Naive thymus-derived CD4-positive, alpha-beta T cell (primary cell): ENCODE measurements at regions of chr2 and their contacts with region 1.

Region 1: GRCh38 chr2:27489498-27490397 is at the start of gene IFT172:
- DNase-seq: peak; percentile 90 to 100 (median 99)
- ATAC-seq: peak; percentile 96
- H3K4me3 ChIP-seq: peak within 1 kb of the TSS; percentile 63
- H3K4me3 Mint-ChIP-seq: peak within 1 kb of the TSS; percentile 78 to 92 (median 84)
- H3K27ac ChIP-seq: peak within 1 kb of the TSS; percentile 80
- H3K27ac Mint-ChIP-seq: peak within 1 kb of the TSS; percentile 82 to 99 (median 98)
- H3K4me1 ChIP-seq: peaks cover 11 to 16% of the 10 kb centered on the region in 2 donors
- H3K4me1 Mint-ChIP-seq: peaks cover 8 to 29% (median 19%) of the 10 kb centered on the region in 7 donors
- H3K27me3 ChIP-seq: peaks cover 0 to 7% of the 10 kb centered on the region in 2 donors
- H3K27me3 Mint-ChIP-seq: peaks cover 13 to 20% (median 17%) of the 10 kb centered on the region in 5 donors
- total RNA-seq, gene IFT172: 12.3 to 35.8 (median 22.2) TPM

Region 2: DNA sequence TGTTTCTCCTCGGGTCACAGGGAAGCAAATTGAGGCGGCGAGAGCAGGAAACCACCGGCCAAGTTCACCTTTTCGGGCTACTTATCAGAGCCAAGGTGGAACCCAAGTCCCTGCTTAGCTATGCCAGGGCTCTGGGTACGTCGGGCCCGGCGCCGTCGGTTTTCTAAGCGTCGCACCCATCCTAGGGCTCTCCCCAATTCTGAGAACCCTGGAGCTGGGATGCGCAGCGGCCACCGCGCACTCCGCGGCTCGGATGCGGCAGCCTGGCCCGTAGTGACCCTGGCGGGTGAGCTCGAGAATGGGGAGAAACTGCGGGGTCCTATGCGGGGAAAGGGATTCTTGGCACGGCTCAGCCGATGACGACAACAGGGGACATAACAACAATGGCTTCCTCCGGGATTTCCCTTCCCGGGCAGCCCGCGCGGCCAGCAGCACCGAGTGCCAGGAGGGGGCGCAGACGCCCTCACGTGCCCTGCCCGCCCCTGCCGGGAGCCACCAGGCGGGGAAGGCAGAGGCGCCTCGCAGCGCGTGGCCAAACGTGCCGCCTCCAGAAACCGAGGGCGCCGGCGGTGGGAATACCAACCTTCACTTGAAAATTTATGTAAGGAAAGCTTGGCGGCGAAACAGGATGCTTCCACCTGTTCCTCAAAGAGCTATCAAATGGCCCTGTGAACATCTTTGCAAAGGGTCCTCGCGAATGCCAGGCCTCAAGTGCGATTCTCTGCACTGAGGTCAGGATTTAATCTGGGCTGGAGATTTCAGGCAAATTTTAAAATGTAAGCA is 224.8 kb before region 1 on chr2:
- CTCF ChIA-PET with region 1: no interaction called
- POLR2A ChIA-PET with region 1: no interaction called
- intact Hi-C with region 1: loop called in 1 of 2 experiments (anchors 5 kb)
- DNase-seq: peak in 8 of 9 donors; percentile 39 to 63 (median 46)
- ATAC-seq: peak; percentile 85
- H3K4me3 ChIP-seq: peak overlapping the region; percentile 59
- H3K4me3 Mint-ChIP-seq: peak overlapping the region in 9 of 10 donors; percentile 59 to 97 (median 85)
- H3K27ac ChIP-seq: no peak overlapping the region
- H3K27ac Mint-ChIP-seq: peak overlapping the region in 2 of 9 donors; percentile 2 to 38
- H3K4me1 ChIP-seq: peaks cover 8 to 23% of the 10 kb centered on the region in 2 donors
- H3K4me1 Mint-ChIP-seq: peaks cover 23 to 33% (median 29%) of the 10 kb centered on the region in 7 donors
- H3K27me3 ChIP-seq: peaks cover 6 to 18% of the 10 kb centered on the region in 2 donors
- H3K27me3 Mint-ChIP-seq: peaks cover 34 to 47% (median 40%) of the 10 kb centered on the region in 5 donors

Region 3: DNA sequence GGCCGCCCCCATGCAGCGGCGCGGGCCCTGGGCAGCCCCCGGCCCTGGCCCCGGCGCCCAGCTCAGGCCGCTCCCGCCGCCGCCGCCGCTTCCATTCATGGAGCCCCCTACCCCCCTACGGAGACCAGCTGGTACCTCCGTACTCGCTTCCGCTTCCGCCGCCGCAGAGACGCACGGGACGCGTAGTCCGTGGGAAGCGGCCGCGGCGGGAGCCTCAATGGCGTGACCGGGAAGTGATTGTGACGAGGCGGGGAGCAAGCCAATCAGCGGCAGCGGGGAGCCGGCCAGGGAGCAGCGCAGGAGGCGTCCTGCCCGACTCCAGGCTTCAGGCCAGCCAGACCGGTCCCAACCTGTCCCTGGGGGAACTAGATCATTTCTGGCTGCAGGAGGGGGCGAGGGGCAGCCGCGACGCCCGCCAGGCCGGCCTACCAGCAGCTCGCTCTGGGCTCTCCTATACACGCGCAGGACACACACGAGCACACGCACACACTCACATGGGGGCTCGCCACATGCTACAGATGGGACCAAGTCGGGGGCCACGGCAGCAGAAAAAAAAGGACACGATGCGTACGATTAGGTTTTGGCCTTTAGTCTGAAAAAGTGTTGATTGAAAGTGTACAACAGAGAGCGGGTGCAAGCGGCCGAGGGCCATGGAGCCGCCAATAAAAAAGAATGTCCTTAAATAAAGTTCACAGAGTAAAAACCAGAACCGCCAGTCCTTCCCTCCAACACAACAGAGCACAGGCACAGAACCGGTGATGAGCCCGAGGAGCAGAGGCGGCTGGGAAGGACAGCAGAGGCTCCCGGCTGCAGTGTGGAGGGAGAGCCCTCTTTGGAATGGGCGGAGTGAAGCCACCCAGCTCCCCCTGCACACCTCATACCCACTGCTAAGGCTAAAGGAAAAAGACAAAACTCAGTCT is 108.9 kb before region 1 on chr2 and contains the start of gene ZNF513:
- CTCF ChIA-PET with region 1: no interaction called
- POLR2A ChIA-PET with region 1: no interaction called
- intact Hi-C with region 1: loop called in 1 of 2 experiments (anchors 1 kb)
- DNase-seq: peak; percentile 71 to 88 (median 81)
- ATAC-seq: peak; percentile 97
- H3K4me3 ChIP-seq: peak within 1 kb of the TSS; percentile 67
- H3K4me3 Mint-ChIP-seq: peak within 1 kb of the TSS; percentile 85 to 94 (median 90)
- H3K27ac ChIP-seq: peak within 1 kb of the TSS; percentile 85
- H3K27ac Mint-ChIP-seq: peak within 1 kb of the TSS; percentile 88 to 97 (median 94)
- H3K4me1 ChIP-seq: peaks cover 9 to 10% of the 10 kb centered on the region in 2 donors
- H3K4me1 Mint-ChIP-seq: peaks cover 18 to 33% (median 30%) of the 10 kb centered on the region in 7 donors
- H3K27me3 ChIP-seq: no peaks in the 10 kb centered on the region
- H3K27me3 Mint-ChIP-seq: no peaks in the 10 kb centered on the region
- total RNA-seq, gene ZNF513: 15.6 to 23.2 (median 19.2) TPM

Region 4: DNA sequence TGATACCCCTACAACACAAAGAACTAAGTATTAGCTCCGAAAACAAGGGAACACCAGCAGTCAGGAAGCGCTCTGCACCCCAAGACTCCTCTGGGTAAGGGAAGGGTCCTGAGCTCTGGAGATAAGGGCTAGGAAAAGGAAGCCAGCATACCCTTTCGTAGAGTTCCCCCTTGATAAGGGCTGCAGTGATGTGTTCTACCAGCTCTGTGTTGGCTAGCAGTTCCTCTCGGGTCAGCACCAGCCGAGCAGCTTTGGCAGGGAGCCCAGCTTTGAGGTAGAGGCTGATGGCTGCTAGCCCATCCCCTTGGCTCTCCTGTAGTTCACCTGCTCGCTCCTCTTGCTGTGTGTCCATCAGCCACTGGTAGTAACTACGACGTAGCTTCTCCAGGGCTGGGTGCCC is 28.6 kb before region 1 on chr2:
- CTCF ChIA-PET with region 1: no interaction called
- POLR2A ChIA-PET with region 1: no interaction called
- intact Hi-C with region 1: no loop called
- DNase-seq: no peak
- ATAC-seq: no peak
- H3K4me3 ChIP-seq: no peak overlapping the region
- H3K4me3 Mint-ChIP-seq: no peak overlapping the region
- H3K27ac ChIP-seq: no peak overlapping the region
- H3K27ac Mint-ChIP-seq: no peak overlapping the region
- H3K4me1 ChIP-seq: no peaks in the 10 kb centered on the region
- H3K4me1 Mint-ChIP-seq: peaks cover 0 to 3% (median 0%) of the 10 kb centered on the region in 7 donors
- H3K27me3 ChIP-seq: no peaks in the 10 kb centered on the region
- H3K27me3 Mint-ChIP-seq: no peaks in the 10 kb centered on the region

Region 5: DNA sequence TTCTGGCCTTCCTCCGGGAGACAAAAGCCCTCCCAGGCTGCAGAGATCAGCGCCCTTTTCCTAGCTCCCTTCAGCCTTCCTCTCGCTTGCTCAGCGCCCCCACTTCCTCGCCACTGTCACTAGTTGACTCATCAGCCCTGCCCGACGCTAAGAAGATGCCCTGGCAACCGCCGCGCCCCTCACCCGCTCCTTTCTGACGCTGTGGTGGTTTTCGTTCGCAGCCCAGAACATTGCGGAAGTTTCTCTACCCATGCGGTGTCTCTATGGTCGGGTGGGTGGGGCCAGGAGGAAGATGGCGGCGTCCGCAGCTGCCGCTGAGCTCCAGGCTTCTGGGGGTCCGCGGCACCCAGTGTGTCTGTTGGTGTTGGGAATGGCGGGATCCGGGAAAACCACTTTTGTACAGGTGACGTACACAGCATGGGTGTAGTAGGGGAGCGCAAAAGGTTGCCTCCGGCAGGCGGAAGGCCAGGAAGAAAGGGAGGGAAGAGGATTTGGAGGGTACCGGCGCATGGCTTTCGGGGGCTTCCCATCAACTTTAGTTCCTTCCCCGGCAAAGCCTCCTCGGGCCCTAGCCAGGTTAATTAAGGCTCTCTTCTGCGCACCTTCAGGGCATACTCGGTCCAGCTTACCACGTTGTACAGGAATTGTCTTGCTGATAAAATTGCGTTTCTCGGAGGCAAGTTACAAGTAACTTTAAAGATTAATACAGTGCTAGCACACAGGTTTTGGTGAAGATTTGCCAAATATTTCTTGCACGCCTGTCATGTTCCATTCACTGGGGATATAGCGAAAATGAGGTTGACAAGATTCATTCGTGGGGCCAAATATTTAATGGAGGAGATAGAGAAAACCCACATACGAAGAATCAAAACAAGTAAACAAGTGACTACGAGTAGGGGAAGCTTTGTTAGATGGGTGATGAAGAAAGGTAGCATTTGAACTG is 139.3 kb after region 1 on chr2 and contains the starts of genes CCDC121 and GPN1:
- CTCF ChIA-PET with region 1: no interaction called
- POLR2A ChIA-PET with region 1: no interaction called
- intact Hi-C with region 1: loop called (anchors 1 kb)
- DNase-seq: peak; percentile 79 to 96 (median 93)
- ATAC-seq: peak; percentile 99
- H3K4me3 ChIP-seq: peak within 1 kb of the TSS; percentile 92
- H3K4me3 Mint-ChIP-seq: no peak within 1 kb of the TSS
- H3K27ac ChIP-seq: peak within 1 kb of the TSS; percentile 92
- H3K27ac Mint-ChIP-seq: peak within 1 kb of the TSS in 5 of 9 donors; percentile 16 to 72 (median 59)
- H3K4me1 ChIP-seq: peaks cover 11 to 13% of the 10 kb centered on the region in 2 donors
- H3K4me1 Mint-ChIP-seq: peaks cover 1 to 33% (median 22%) of the 10 kb centered on the region in 7 donors
- H3K27me3 ChIP-seq: no peaks in the 10 kb centered on the region
- H3K27me3 Mint-ChIP-seq: no peaks in the 10 kb centered on the region
- total RNA-seq, gene CCDC121: 0.61 to 2.7 (median 1.9) TPM
- total RNA-seq, gene GPN1: 27.8 to 45.5 (median 28.9) TPM

Region 6: GRCh38 chr2:27683390-27684071 is 193.8 kb after region 1 on chr2:
- CTCF ChIA-PET with region 1: no interaction called
- POLR2A ChIA-PET with region 1: no interaction called
- intact Hi-C with region 1: loop called in 1 of 2 experiments (anchors 5 kb)
- DNase-seq: peak; percentile 54 to 90 (median 82)
- ATAC-seq: peak; percentile 98
- H3K4me3 ChIP-seq: no peak overlapping the region
- H3K4me3 Mint-ChIP-seq: peak overlapping the region in 1 of 10 donors; percentile 35
- H3K27ac ChIP-seq: no peak overlapping the region
- H3K27ac Mint-ChIP-seq: peak overlapping the region; percentile 35 to 78 (median 66)
- H3K4me1 ChIP-seq: peaks cover 0 to 28% of the 10 kb centered on the region in 2 donors
- H3K4me1 Mint-ChIP-seq: peaks cover 5 to 25% (median 13%) of the 10 kb centered on the region in 7 donors
- H3K27me3 ChIP-seq: no peaks in the 10 kb centered on the region
- H3K27me3 Mint-ChIP-seq: no peaks in the 10 kb centered on the region